ENCODE measurements at regions of chr2 and their contacts with region 1.

Region 1: GRCh38 chr2:68121873-68122679 is 35.6 kb upstream of the PNO1 start:
- DNase-seq: peak; percentile 82
- ATAC-seq: peak; percentile 51
- H3K4me3 Mint-ChIP-seq: no peak overlapping the region
- H3K27ac Mint-ChIP-seq: no peak overlapping the region
- H3K4me1 Mint-ChIP-seq: peaks cover 3% of the 10 kb centered on the region
- H3K27me3 Mint-ChIP-seq: no peaks in the 10 kb centered on the region

Region 2: GRCh38 chr2:68134554-68134953 is 12.5 kb after region 1 on chr2:
- CTCF ChIA-PET with region 1: interaction called, 19 read pairs
- POLR2A ChIA-PET with region 1: no interaction called
- DNase-seq: no peak
- ATAC-seq: no peak
- H3K4me3 Mint-ChIP-seq: no peak overlapping the region
- H3K27ac Mint-ChIP-seq: no peak overlapping the region
- H3K4me1 Mint-ChIP-seq: no peaks in the 10 kb centered on the region
- H3K27me3 Mint-ChIP-seq: no peaks in the 10 kb centered on the region

Region 3: DNA sequence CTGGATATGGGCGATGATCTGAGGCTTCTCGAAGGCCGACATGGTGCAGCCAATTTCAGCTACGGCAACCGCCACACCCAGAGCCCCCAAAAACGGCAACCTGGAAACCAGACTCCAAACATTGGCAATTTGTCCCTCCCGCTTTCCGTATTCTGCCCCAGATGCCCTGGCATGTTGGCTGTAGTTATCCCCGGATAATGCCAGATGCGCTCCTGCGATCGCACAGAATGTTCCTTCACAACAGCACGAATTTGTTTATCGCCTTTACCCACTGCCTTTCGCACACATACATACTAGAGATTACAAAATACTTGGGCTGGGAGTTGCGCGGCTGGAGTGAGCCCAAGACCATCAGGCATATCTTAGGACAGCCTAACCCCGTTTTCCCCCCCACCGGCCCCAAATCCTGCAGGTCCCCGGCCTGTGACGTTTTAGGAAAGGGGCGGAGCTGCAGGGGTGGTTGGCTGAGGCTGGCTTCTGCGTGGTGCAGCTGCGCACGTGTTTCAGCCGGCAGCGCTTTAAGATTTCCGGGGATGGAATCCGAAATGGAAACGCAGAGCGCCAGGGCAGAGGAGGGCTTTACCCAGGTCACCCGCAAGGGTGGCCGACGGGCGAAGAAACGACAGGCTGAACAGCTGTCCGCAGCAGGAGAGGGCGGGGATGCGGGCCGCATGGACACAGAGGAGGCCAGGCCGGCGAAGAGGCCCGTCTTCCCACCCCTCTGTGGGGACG is 35.5 kb after region 1 on chr2 and contains the start of gene PNO1:
- CTCF ChIA-PET with region 1: interaction called, 12 read pairs
- POLR2A ChIA-PET with region 1: no interaction called
- DNase-seq: peak; percentile 97
- ATAC-seq: peak; percentile 93
- H3K4me3 Mint-ChIP-seq: peak within 1 kb of the TSS; percentile 95
- H3K27ac Mint-ChIP-seq: peak within 1 kb of the TSS; percentile 99
- H3K4me1 Mint-ChIP-seq: peaks cover 37% of the 10 kb centered on the region
- H3K27me3 Mint-ChIP-seq: no peaks in the 10 kb centered on the region
- total RNA-seq, gene PNO1: 12.3 to 13.3 TPM

Region 4: GRCh38 chr2:68185541-68186164 is 63.6 kb after region 1 on chr2:
- CTCF ChIA-PET with region 1: interaction called, 10 read pairs
- POLR2A ChIA-PET with region 1: no interaction called
- DNase-seq: peak; percentile 66
- ATAC-seq: peak; percentile 60
- H3K4me3 Mint-ChIP-seq: no peak overlapping the region
- H3K27ac Mint-ChIP-seq: no peak overlapping the region
- H3K4me1 Mint-ChIP-seq: peaks cover 10% of the 10 kb centered on the region
- H3K27me3 Mint-ChIP-seq: no peaks in the 10 kb centered on the region

Region 5: DNA sequence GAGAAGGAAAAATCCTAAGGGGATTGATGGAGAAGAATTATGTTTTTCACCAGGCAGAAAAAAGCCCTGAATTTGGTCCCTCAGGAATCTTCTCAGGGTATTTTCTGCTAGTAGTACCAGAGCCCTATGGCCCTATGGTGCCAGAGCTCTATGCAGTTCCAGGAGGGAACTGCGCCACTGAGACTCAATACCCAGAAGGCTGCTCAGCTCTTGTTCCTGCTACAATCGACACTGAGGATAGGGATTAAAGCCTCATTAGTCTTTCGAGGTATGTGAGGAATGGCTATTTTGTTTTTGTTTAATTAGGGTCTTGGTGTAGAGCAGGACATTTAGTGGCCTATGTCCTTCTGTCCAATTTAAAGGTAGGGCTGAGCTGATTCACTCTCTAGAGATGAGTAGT is 151.9 kb after region 1 on chr2:
- CTCF ChIA-PET with region 1: interaction called, 13 read pairs
- POLR2A ChIA-PET with region 1: no interaction called
- DNase-seq: no peak
- ATAC-seq: no peak
- H3K4me3 Mint-ChIP-seq: no peak overlapping the region
- H3K27ac Mint-ChIP-seq: no peak overlapping the region
- H3K4me1 Mint-ChIP-seq: no peaks in the 10 kb centered on the region
- H3K27me3 Mint-ChIP-seq: peaks cover 37% of the 10 kb centered on the region

Region 6: DNA sequence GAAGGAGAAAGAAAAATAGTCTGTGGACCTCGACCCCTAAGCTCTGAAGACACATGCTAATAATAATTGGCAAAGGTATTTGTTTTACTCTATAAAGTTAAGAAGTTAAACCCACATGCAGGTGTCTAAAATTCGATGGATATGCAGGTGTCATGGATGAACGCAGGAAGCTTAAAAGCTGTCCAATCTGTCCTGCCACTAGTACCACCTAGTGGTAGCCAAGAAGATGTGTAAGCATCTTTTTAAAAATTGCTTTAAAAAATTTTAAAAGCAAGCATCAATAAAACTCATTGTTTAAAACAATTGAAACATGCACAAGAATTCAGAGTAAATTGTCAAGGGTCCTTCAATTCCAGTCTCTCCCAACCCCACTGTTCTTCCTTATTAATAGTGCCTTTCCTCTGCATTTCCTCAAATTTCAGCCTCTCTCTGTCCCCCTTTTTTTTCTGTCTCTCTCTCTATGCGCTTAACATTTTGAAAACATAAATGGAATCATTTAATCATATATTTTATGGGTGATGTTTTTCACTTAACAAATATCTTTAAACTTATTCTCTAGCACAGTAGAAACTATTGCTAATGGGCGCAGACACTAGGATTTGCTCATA is 160.8 kb after region 1 on chr2:
- CTCF ChIA-PET with region 1: interaction called, 78 read pairs
- POLR2A ChIA-PET with region 1: no interaction called
- DNase-seq: peak; percentile 27
- ATAC-seq: no peak
- H3K4me3 Mint-ChIP-seq: no peak overlapping the region
- H3K27ac Mint-ChIP-seq: no peak overlapping the region
- H3K4me1 Mint-ChIP-seq: no peaks in the 10 kb centered on the region
- H3K27me3 Mint-ChIP-seq: peaks cover 52% of the 10 kb centered on the region

Region 7: GRCh38 chr2:68295516-68295915 is 173.4 kb after region 1 on chr2:
- CTCF ChIA-PET with region 1: interaction called, 26 read pairs
- POLR2A ChIA-PET with region 1: interaction called, 3 read pairs
- DNase-seq: no peak
- ATAC-seq: no peak
- H3K4me3 Mint-ChIP-seq: no peak overlapping the region
- H3K27ac Mint-ChIP-seq: no peak overlapping the region
- H3K4me1 Mint-ChIP-seq: peaks cover 7% of the 10 kb centered on the region
- H3K27me3 Mint-ChIP-seq: peaks cover 5% of the 10 kb centered on the region